Activated B cell treated with CpG ODN at 0.5 μM for 24 hours (primary cell): ENCODE measurements at regions of chr6 and their contacts with region 1.

Region 1: DNA sequence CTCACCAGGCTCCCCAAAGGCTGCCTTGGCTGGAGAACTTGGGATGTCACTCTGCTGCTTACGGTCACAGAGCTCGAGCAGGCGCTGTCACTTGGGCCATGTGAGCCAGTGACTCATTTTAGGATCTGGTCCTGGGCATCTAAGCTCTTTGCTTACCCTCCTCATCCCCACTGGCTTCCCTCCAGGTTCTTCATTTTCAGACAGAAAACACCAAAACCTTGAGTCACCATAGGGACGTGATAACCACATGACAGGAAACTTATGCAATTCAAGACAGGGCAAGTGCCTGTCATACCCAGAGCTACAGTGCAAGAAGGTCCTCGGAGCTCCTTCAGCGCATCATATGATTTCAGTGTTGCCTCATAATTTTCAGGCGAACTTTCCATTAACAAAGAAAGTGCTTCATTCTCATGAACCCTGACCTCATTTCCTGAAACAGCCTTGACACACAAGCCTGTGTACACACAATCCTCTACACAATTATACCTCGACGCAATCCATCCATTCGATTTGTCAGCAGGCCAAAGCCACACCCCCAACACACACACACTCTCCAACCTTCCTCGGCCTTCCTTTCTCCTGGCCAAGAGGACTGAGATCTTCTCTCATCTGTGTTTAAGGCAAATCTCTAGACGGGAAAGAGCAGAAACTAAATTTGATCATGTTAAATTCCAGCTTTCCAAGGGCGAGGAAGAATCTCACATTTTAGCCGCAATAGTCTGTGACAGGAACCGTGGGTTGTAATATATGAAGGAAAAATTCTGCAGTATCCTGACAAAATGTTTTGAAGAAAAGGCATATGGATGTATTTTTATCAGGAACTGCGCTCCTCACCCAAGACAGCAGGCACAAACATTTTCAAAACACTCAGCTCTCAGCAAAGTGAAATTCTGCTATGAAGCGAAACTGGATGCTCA is 25.3 kb downstream of the TBC1D7 start:
- DNase-seq: no peak
- ATAC-seq: peak; percentile 55
- H3K4me3 Mint-ChIP-seq: peak overlapping the region; percentile 63
- H3K27ac Mint-ChIP-seq: peak overlapping the region; percentile 92
- H3K4me1 Mint-ChIP-seq: peaks cover 79% of the 10 kb centered on the region
- H3K27me3 Mint-ChIP-seq: no peaks in the 10 kb centered on the region
- CTCF ChIP-seq: no peak

Region 2: GRCh38 chr6:13261464-13261994 is 41.5 kb before region 1 on chr6:
- CTCF ChIA-PET with region 1: no interaction called
- POLR2A ChIA-PET with region 1: interaction called, 35 read pairs
- intact Hi-C with region 1: loop called (anchors 1 kb)
- DNase-seq: peak; percentile 57
- ATAC-seq: peak; percentile 74
- H3K4me3 Mint-ChIP-seq: peak overlapping the region; percentile 74
- H3K27ac Mint-ChIP-seq: peak overlapping the region; percentile 75
- H3K4me1 Mint-ChIP-seq: peaks cover 92% of the 10 kb centered on the region
- H3K27me3 Mint-ChIP-seq: no peaks in the 10 kb centered on the region
- CTCF ChIP-seq: no peak

Region 3: GRCh38 chr6:13286181-13286580 is 16.8 kb before region 1 on chr6:
- CTCF ChIA-PET with region 1: interaction called, 6 read pairs
- POLR2A ChIA-PET with region 1: interaction called, 56 read pairs
- intact Hi-C with region 1: loop called (anchors 1 kb)
- DNase-seq: no peak
- ATAC-seq: peak; percentile 71
- H3K4me3 Mint-ChIP-seq: peak overlapping the region; percentile 39
- H3K27ac Mint-ChIP-seq: peak overlapping the region; percentile 59
- H3K4me1 Mint-ChIP-seq: peaks cover 67% of the 10 kb centered on the region
- H3K27me3 Mint-ChIP-seq: no peaks in the 10 kb centered on the region
- CTCF ChIP-seq: no peak